ENCODE measurements at regions of chr12 and their contacts with region 1.

Region 1: GRCh38 chr12:44748950-44749468 is 127.1 kb downstream of the NELL2 start:
- DNase-seq: no peak
- ATAC-seq: no peak
- H3K4me3 Mint-ChIP-seq: no peak overlapping the region
- H3K27ac Mint-ChIP-seq: no peak overlapping the region
- H3K4me1 Mint-ChIP-seq: peaks cover 30% of the 10 kb centered on the region
- H3K27me3 Mint-ChIP-seq: no peaks in the 10 kb centered on the region
- CTCF ChIP-seq: no peak

Region 2: GRCh38 chr12:44765796-44766195 is 16.8 kb after region 1 on chr12:
- CTCF ChIA-PET with region 1: interaction called, 14 read pairs
- POLR2A ChIA-PET with region 1: interaction called, 3 read pairs
- intact Hi-C with region 1: no loop called
- DNase-seq: no peak
- ATAC-seq: no peak
- H3K4me3 Mint-ChIP-seq: no peak overlapping the region
- H3K27ac Mint-ChIP-seq: no peak overlapping the region
- H3K4me1 Mint-ChIP-seq: no peaks in the 10 kb centered on the region
- H3K27me3 Mint-ChIP-seq: no peaks in the 10 kb centered on the region
- CTCF ChIP-seq: no peak

Measured in activated CD8-positive, alpha-beta T cell treated with anti-CD3 and anti-CD28 coated beads for 36 hours (primary cell).